Activated T-helper 1 cell treated with anti-CD3 and anti-CD28 coated beads, Interleukin-12 subunit alpha, Interleukin-12 subunit beta, Interleukin-2, Interleukin-4 antibody, amounts not matched to agents 30 ng/mL and 10 ng/mL and 1 ng/mL, durations not matched to agents 14 hours and 24 hours and 36 hours (primary cell): ENCODE measurements at regions of chr4 and their contacts with region 1.

Region 1: DNA sequence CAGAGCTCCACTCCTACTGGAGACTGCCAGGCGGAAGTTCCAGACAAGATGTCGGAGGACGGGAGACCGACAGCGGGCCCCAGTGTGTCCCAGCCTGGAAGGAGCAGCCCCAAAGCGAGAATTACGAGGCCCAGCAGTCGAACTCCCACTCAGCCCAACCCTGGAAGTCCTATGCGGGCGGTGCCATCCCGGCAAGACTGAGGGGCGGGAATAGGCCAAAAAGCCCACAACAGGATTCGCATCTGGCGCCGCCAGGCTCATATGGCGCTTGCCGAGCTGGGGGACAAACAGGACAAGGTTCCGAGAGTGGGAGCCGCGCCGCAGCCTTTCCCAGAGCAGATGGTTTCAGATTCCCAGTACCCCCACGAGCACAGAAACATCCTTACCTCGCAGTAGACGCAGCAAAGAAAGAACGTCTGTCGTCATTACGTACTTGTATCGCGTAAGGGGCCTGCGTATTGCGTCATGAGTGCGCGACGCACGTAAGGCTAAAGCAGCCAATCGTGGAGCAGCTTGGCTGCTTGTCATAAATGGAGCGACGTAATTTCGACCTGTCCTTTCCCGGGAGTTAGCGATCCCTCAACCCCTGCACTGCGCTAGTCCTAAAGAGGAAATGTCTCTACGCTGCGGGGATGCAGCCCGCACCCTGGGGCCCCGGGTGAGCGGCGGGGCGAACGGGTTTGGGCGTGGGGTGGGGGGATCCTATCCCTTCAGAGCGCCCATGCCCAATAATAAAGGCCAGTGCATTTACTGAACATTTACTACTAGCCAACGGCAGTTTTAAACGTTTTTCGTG is at the starts of genes LIAS and RPL9:
- DNase-seq: peak; percentile 93
- H3K4me3 Mint-ChIP-seq: peak within 1 kb of the TSS; percentile 99
- H3K27ac Mint-ChIP-seq: peak within 1 kb of the TSS; percentile 99
- H3K4me1 Mint-ChIP-seq: peaks cover 49% of the 10 kb centered on the region
- H3K27me3 Mint-ChIP-seq: no peaks in the 10 kb centered on the region
- total RNA-seq, gene LIAS: 28.6 and 29.7 TPM in 2 replicates
- total RNA-seq, gene RPL9: 1,540 and 1,586 TPM in 2 replicates

Region 2: DNA sequence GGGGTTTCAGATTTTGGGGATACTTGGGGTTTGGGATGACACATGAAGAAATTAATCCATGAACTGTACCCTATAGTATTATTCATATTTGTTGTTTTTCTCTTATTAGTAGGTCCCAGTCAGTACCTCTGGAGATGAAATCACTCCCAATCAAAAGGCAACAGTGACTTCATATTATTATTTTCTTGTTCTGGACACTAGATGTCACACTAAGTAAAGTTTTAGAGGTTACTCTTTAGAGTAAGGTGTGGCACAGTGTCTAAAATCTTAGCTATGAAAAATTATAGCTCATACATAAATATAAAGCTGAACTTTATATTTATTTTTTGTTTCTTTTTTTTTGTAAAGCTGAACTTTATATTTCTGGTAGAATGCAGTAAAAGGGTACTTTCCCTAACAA is 556.0 kb before region 1 on chr4:
- intact Hi-C with region 1: loop called (anchors 5 kb)
- DNase-seq: no peak
- H3K4me3 Mint-ChIP-seq: no peak overlapping the region
- H3K27ac Mint-ChIP-seq: no peak overlapping the region
- H3K4me1 Mint-ChIP-seq: peaks cover 35% of the 10 kb centered on the region
- H3K27me3 Mint-ChIP-seq: peaks cover 10% of the 10 kb centered on the region

Region 3: DNA sequence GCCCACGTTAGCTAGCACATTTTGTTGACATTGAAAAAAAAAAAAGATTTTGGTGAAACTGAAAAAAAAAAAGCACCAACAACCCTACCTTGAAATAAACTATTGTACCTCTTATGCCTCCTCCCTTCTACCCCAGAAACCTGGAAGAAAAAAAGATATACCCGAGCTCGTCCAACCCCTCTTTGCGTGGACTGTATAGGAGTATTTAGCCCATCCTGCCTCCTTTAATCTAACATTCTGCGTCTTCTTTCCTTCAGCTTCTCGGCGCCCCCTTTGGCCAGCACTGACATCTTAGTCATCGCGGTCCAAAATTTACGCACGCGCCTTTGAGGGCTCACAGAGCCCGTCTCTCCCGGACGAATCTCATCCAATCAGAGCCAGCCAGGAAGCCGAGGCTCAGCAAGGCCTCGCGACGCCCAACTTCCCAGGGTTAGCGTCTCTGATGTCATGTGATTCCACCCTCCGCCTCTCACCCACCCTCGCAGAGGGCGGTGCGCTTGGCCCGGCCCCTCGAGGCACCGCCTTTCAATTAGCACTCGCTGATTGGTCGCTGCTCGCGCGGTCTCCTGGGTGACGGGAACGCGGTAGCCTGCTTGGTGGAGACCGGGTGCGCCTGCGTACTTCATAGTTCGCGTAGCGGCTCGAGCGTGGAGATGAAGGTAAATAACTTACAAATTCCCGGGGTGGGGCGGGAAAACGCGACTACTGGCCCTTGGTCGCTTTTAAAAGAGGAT is 276.6 kb before region 1 on chr4 and contains the start of gene WDR19:
- intact Hi-C with region 1: loop called (anchors 1 kb)
- DNase-seq: peak; percentile 98
- H3K4me3 Mint-ChIP-seq: no peak within 1 kb of the TSS
- H3K27ac Mint-ChIP-seq: no peak within 1 kb of the TSS
- H3K4me1 Mint-ChIP-seq: no peaks in the 10 kb centered on the region
- H3K27me3 Mint-ChIP-seq: peaks cover 15% of the 10 kb centered on the region
- total RNA-seq, gene WDR19: 12.6 and 13.7 TPM in 2 replicates

Region 4: GRCh38 chr4:39353478-39354253 is 105.0 kb before region 1 on chr4:
- intact Hi-C with region 1: loop called (anchors 1 kb)
- DNase-seq: peak; percentile 32
- H3K4me3 Mint-ChIP-seq: peak overlapping the region; percentile 80
- H3K27ac Mint-ChIP-seq: peak overlapping the region; percentile 96
- H3K4me1 Mint-ChIP-seq: peaks cover 63% of the 10 kb centered on the region
- H3K27me3 Mint-ChIP-seq: no peaks in the 10 kb centered on the region

Region 5: GRCh38 chr4:39505581-39505980 is 46.9 kb after region 1 on chr4:
- intact Hi-C with region 1: no loop called
- DNase-seq: no peak
- H3K4me3 Mint-ChIP-seq: no peak overlapping the region
- H3K27ac Mint-ChIP-seq: no peak overlapping the region
- H3K4me1 Mint-ChIP-seq: no peaks in the 10 kb centered on the region
- H3K27me3 Mint-ChIP-seq: no peaks in the 10 kb centered on the region

Region 6: GRCh38 chr4:39527273-39528060 is 68.8 kb after region 1 on chr4 and contains the start of gene UGDH:
- intact Hi-C with region 1: loop called (anchors 1 kb)
- DNase-seq: peak; percentile 91
- H3K4me3 Mint-ChIP-seq: peak within 1 kb of the TSS; percentile 99
- H3K27ac Mint-ChIP-seq: peak within 1 kb of the TSS; percentile 92
- H3K4me1 Mint-ChIP-seq: peaks cover 19% of the 10 kb centered on the region
- H3K27me3 Mint-ChIP-seq: no peaks in the 10 kb centered on the region
- total RNA-seq, gene UGDH: 26.0 and 30.6 TPM in 2 replicates

Region 7: GRCh38 chr4:39697740-39698423 is 239.2 kb after region 1 on chr4 and contains the start of gene UBE2K:
- intact Hi-C with region 1: loop called (anchors 2 kb)
- DNase-seq: peak; percentile 91
- H3K4me3 Mint-ChIP-seq: peak within 1 kb of the TSS; percentile 97
- H3K27ac Mint-ChIP-seq: peak within 1 kb of the TSS; percentile 97
- H3K4me1 Mint-ChIP-seq: peaks cover 37% of the 10 kb centered on the region
- H3K27me3 Mint-ChIP-seq: no peaks in the 10 kb centered on the region
- total RNA-seq, gene UBE2K: 92.2 and 96.4 TPM in 2 replicates